A673 (cell line): ENCODE measurements at regions of chr3 and their contacts with region 1.

Region 1: DNA sequence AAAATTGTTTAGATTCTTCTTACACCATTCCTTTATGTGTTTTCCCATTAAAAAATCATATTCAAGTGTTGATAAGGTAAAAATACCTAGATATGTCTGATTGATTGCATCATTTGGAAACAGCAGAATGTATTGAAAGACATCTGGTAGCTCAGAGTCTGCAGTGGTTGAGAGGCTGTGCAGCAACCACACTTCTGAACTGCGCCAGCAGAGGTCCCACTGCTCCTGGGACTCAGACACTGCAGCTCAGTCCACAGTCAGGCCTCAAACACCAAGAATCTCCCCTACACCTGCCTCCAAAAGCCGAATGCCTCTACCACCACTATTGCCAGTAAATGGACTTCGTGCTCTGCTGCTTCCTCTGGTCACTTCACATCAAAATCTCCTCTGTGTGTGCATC is 176.9 kb upstream of the LMCD1 start:
- DNase-seq: peak; percentile 82
- H3K4me3 ChIP-seq: no peak overlapping the region
- H3K27ac ChIP-seq: peak overlapping the region; percentile 37
- H3K4me1 ChIP-seq: peaks cover 11% of the 10 kb centered on the region
- H3K27me3 ChIP-seq: no peaks in the 10 kb centered on the region
- CTCF ChIP-seq: peak; percentile 89

Region 2: GRCh38 chr3:7977245-7978103 is 347.3 kb before region 1 on chr3:
- CTCF ChIA-PET with region 1: no interaction called
- POLR2A ChIA-PET with region 1: no interaction called
- intact Hi-C with region 1: loop called (anchors 10 kb)
- DNase-seq: peak; percentile 95
- H3K4me3 ChIP-seq: peak overlapping the region; percentile 29
- H3K27ac ChIP-seq: peak overlapping the region; percentile 73
- H3K4me1 ChIP-seq: peaks cover 18% of the 10 kb centered on the region
- H3K27me3 ChIP-seq: no peaks in the 10 kb centered on the region
- CTCF ChIP-seq: no peak

Region 3: GRCh38 chr3:8621872-8622271 is 297.1 kb after region 1 on chr3:
- CTCF ChIA-PET with region 1: no interaction called
- POLR2A ChIA-PET with region 1: no interaction called
- intact Hi-C with region 1: no loop called
- DNase-seq: no peak
- H3K4me3 ChIP-seq: no peak overlapping the region
- H3K27ac ChIP-seq: no peak overlapping the region
- H3K4me1 ChIP-seq: no peaks in the 10 kb centered on the region
- H3K27me3 ChIP-seq: no peaks in the 10 kb centered on the region
- CTCF ChIP-seq: no peak